Astrocyte of the cerebellum (primary cell): ENCODE measurements at regions of chr11 and their contacts with region 1.

Region 1: DNA sequence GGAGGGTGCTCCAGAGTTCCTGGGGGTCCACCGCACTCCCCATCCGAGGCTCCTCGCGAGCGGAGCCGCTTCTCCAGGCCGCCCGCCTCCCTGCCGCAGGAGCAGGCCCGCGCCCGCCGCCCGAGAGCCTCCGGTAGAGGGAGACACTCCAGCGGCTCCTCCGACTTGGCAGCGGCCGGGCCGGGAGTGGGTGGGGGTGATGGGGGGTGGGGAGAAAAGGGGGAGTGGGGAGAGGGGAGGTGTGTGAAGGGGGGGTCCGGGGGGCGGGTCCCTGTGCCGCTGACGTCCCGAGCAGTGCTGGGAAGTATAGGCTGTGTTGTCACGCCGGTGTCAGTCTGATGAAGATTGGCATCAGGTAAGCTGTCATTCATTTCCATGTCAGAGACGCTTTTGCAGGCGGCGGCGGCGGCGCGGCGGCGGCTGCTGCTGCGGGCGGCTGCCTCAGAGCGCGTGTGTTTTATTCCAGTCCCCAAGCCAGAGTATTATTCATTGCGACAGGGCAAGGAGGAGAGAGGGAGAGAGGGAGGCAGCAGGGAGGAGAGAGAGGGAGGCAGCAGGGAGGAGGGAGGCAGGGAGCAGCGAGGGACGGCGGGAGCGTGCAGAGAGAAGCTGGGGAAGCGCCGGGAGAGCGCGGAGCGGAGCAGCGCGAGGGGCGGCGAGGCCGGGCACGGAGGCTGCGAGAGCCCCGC is at the start of gene PKNOX2:
- DNase-seq: peak; percentile 52
- H3K4me3 ChIP-seq: peak within 1 kb of the TSS; percentile 64
- CTCF ChIP-seq: peak; percentile 55

Region 2: GRCh38 chr11:125224391-125225010 is 59.9 kb after region 1 on chr11:
- in situ Hi-C with region 1: no loop called
- DNase-seq: no peak
- H3K4me3 ChIP-seq: no peak overlapping the region
- CTCF ChIP-seq: peak; percentile 43

Region 3: GRCh38 chr11:125257190-125257579 is 92.6 kb after region 1 on chr11:
- in situ Hi-C with region 1: loop called (anchors 5 kb)
- DNase-seq: no peak
- H3K4me3 ChIP-seq: no peak overlapping the region
- CTCF ChIP-seq: peak; percentile 27